T-cell (primary cell): ENCODE measurements at regions of chr5 and their contacts with region 1.

Region 1: DNA sequence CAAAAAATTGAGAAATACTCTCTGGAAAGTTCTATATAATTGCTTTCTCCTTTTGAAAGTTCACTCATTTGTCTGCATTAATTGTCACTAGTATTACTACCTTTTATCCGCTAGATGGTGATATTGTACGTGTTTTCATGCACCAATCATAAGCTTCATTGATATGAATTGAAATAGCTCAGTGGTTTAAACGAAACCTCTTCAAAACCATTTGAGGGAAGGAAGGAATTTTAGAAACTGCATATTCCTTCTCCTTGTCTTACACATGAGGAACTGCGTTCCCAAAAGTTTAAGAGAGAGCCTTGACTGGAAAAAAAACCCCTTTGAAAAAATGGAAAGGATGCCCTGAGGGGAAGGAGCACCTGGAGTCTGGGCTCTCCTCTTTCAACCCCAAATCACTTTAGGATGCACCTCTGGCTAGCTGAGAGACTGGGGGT is 98.6 kb downstream of the YTHDC2 start:
- DNase-seq: peak in 1 of 35 experiments; percentile 59
- ATAC-seq: peak; percentile 55 to 65 (median 61)
- H3K4me3 ChIP-seq: no peak overlapping the region
- H3K4me3 Mint-ChIP-seq: no peak overlapping the region
- H3K27ac ChIP-seq: no peak overlapping the region
- H3K27ac Mint-ChIP-seq: no peak overlapping the region
- H3K4me1 ChIP-seq: no peaks in the 10 kb centered on the region
- H3K4me1 Mint-ChIP-seq: peaks cover 2 to 5% (median 4%) of the 10 kb centered on the region in 3 donors
- H3K27me3 ChIP-seq: peaks cover 0 to 2% of the 10 kb centered on the region in 2 experiments
- H3K27me3 Mint-ChIP-seq: peaks cover 6 to 16% of the 10 kb centered on the region in 2 donors

Region 2: GRCh38 chr5:112995764-112996618 is 616.1 kb before region 1 on chr5:
- CTCF ChIA-PET with region 1: interaction called, 4 to 22 read pairs
- POLR2A ChIA-PET with region 1: no interaction called
- DNase-seq: peak; percentile 39 to 85 (median 69)
- ATAC-seq: peak; percentile 77 to 84 (median 81)
- H3K4me3 ChIP-seq: no peak overlapping the region
- H3K4me3 Mint-ChIP-seq: no peak overlapping the region
- H3K27ac ChIP-seq: no peak overlapping the region
- H3K27ac Mint-ChIP-seq: peak overlapping the region in 1 of 2 donors; percentile 33
- H3K4me1 ChIP-seq: peaks cover 2 to 10% of the 10 kb centered on the region in 2 experiments
- H3K4me1 Mint-ChIP-seq: peaks cover 32 to 41% (median 40%) of the 10 kb centered on the region in 3 donors
- H3K27me3 ChIP-seq: no peaks in the 10 kb centered on the region
- H3K27me3 Mint-ChIP-seq: no peaks in the 10 kb centered on the region

Region 3: DNA sequence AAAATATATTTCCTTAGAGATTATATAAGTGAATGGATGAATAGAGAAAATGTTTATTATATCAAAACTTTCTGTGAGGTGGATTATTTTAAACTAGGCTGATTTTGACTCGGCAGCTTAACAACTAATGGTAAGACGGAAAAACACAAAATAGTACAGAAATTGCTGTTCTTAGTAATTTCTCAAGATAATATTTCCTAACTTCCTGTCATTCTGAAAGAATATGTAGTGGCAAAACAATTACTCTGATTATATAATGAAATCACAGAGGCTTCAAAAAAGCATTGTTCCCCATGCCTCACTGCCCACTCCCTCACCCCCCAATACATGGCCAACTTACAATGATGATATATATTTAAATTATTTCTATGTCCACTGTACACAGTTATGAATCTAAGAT is 13.2 kb before region 1 on chr5:
- CTCF ChIA-PET with region 1: interaction called, 5 to 25 read pairs
- POLR2A ChIA-PET with region 1: no interaction called
- DNase-seq: no peak
- ATAC-seq: no peak
- H3K4me3 ChIP-seq: no peak overlapping the region
- H3K4me3 Mint-ChIP-seq: no peak overlapping the region
- H3K27ac ChIP-seq: no peak overlapping the region
- H3K27ac Mint-ChIP-seq: peak overlapping the region in 1 of 2 donors; percentile 25
- H3K4me1 ChIP-seq: no peaks in the 10 kb centered on the region
- H3K4me1 Mint-ChIP-seq: no peaks in the 10 kb centered on the region
- H3K27me3 ChIP-seq: no peaks in the 10 kb centered on the region
- H3K27me3 Mint-ChIP-seq: no peaks in the 10 kb centered on the region

Region 4: DNA sequence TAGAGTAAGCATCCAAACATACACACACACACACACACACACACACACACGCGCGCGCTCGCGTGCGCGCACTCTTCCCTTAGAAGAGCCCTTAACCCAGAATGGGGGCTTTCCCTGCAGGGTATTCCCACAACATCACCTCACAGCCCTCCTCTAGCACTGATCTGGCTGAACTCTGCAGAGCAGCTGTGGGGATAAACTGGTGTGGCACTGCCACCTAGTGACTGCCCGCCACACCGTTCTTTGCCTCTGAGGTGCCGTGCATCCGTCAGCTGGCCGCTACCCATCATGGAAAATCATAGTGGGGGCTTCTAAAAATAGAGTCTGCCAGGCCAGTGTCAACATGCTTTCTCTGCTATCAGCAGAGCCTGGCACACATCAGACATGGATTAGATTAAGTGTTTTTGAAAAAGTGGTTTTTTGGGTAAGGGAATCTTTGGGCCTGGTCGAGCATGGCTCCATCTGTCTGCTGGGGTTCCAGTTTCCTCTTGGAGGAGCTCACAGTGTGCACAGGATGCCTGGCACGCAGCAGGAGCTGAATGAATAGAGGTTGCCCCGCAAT is 837.9 kb after region 1 on chr5:
- CTCF ChIA-PET with region 1: interaction called, 3 to 21 read pairs
- POLR2A ChIA-PET with region 1: no interaction called
- DNase-seq: peak in 22 of 35 experiments; percentile 0 to 40 (median 5)
- ATAC-seq: peak; percentile 44 to 62 (median 54)
- H3K4me3 ChIP-seq: no peak overlapping the region
- H3K4me3 Mint-ChIP-seq: no peak overlapping the region
- H3K27ac ChIP-seq: no peak overlapping the region
- H3K27ac Mint-ChIP-seq: no peak overlapping the region
- H3K4me1 ChIP-seq: peaks cover 0 to 2% of the 10 kb centered on the region in 2 experiments
- H3K4me1 Mint-ChIP-seq: peaks cover 0 to 4% (median 0%) of the 10 kb centered on the region in 3 donors
- H3K27me3 ChIP-seq: no peaks in the 10 kb centered on the region
- H3K27me3 Mint-ChIP-seq: peaks cover 8 to 10% of the 10 kb centered on the region in 2 donors

Region 5: DNA sequence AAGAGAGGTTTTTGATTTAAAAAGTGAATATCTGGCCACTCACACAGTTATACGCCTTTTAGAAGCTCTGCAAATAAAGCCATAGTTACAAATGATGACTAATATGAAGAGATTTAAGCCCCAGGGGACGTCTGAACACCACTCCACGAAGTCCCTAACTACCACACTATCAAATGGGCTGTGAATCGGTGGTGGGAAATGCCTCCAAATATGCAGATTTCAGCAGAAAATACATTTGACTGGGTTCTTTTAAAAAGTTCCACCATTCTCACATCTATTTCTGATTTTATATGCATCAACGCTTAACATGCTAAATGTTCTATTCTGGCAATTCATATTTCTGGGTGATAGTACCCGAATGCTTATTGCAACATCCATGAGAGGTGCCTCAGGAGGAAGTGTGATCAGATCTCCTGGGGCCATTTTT is 1967.7 kb after region 1 on chr5:
- CTCF ChIA-PET with region 1: interaction called in 1 of 2 experiments, 12 read pairs
- POLR2A ChIA-PET with region 1: no interaction called
- DNase-seq: no peak
- ATAC-seq: no peak
- H3K4me3 ChIP-seq: no peak overlapping the region
- H3K4me3 Mint-ChIP-seq: no peak overlapping the region
- H3K27ac ChIP-seq: no peak overlapping the region
- H3K27ac Mint-ChIP-seq: no peak overlapping the region
- H3K4me1 ChIP-seq: no peaks in the 10 kb centered on the region
- H3K4me1 Mint-ChIP-seq: no peaks in the 10 kb centered on the region
- H3K27me3 ChIP-seq: no peaks in the 10 kb centered on the region
- H3K27me3 Mint-ChIP-seq: no peaks in the 10 kb centered on the region